ENCODE measurements at regions of chr6 and their contacts with region 1.

Region 1: DNA sequence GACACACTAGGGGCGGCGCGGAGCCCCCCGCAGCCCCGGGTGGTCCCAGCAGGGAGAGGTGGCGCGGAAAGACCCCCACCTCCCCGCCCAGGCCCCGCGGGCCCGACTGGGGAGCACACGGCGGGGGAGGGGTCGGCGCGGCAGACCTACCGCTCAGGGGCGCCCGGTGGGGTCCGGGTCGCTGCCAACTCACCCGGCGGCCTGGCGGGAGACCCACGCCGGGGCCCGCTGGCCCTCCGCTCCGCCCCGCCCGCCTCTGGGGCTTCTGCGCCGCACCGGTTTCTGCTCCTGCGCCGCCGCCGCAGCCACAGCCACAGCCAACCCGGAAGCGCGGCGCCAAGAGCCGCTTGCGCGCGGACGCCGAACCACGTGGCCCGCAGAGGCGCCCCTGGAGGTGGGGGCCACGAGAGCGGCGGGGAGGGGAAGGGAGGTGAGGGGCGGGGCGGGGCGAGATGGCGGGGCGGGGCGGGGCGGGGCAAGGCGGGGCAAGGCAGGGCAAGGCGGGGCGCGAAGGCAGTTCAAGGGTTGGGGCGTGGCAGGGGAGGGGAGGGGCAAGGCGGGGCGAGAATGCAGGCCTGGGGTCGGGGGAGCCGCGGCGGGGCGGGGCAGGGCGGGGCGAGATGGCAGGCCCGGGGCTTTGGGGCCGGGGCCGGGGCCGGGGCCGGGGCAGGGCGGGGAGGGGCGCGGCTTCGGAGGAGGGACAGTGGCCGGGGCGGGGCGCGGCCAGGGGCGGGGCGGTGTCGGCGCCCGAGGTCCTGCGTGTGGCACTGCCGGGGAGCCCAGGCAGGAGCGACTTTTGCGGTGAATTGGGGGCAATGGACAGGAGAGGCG is at the start of gene ZBTB24:
- DNase-seq: peak; percentile 95
- ATAC-seq: peak; percentile 97
- H3K4me3 ChIP-seq: peak within 1 kb of the TSS; percentile 91 to 95
- H3K27ac ChIP-seq: peak within 1 kb of the TSS in 1 of 2 donors; percentile 2
- H3K4me1 ChIP-seq: peaks cover 7 to 14% of the 10 kb centered on the region in 2 donors
- H3K27me3 ChIP-seq: no peaks in the 10 kb centered on the region
- total RNA-seq, gene ZBTB24: 6.8 to 8.3 TPM

Region 2: DNA sequence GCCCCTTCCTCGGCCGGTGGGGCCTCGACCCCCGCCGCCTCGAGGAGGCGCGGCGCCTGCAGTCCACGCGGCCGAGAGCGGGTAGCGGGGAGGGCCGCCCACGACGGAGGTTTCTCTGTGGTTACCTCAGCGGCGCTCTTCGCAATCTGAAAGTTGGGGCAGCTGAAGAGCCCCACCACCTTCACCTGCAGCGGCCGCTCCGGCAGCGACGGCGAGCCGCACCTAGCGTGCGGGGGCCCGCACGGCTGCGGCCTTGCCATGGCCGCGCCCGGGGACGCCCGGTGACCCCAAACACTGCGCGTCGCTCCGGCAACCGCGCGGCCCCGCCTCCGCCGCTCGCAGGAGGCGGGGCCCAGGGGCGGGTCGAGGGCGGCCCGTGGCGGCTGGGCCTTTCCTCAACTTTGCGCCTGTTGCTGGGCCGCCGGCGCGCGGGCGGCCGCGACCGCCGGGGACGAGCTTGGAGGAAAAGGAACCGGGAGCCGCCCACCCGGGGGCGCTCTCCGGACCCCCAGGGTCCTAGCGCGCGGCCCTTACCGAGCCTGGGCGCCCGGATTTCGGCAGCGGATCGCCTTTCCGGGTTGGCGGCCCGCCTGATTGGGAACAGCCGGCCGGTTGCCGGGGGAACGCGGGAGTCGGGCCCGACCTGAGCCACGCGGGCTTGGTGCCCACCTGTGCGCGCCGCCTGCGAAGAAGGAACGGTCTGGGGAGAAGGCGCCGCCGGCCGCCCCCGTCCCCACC is 42.6 kb before region 1 on chr6 and contains the starts of genes PPIL6 and SMPD2:
- intact Hi-C with region 1: loop called in 1 of 2 experiments (anchors 1 kb)
- DNase-seq: peak; percentile 94 to 96
- ATAC-seq: peak; percentile 96
- H3K4me3 ChIP-seq: peak within 1 kb of the TSS; percentile 57 to 63
- H3K27ac ChIP-seq: peak within 1 kb of the TSS in 1 of 2 donors; percentile 35
- H3K4me1 ChIP-seq: no peaks in the 10 kb centered on the region
- H3K27me3 ChIP-seq: no peaks in the 10 kb centered on the region
- total RNA-seq, gene PPIL6: 1.0 to 1.5 TPM
- total RNA-seq, gene SMPD2: 6.6 to 9.5 TPM

Region 3: GRCh38 chr6:109455502-109456282 is 27.4 kb before region 1 on chr6 and contains the start of gene MICAL1:
- intact Hi-C with region 1: loop called in 1 of 2 experiments (anchors 2 kb)
- DNase-seq: peak; percentile 84 to 90
- ATAC-seq: peak; percentile 65
- H3K4me3 ChIP-seq: peak within 1 kb of the TSS; percentile 62 to 78
- H3K27ac ChIP-seq: peak within 1 kb of the TSS; percentile 14 to 62
- H3K4me1 ChIP-seq: no peaks in the 10 kb centered on the region
- H3K27me3 ChIP-seq: no peaks in the 10 kb centered on the region
- total RNA-seq, gene MICAL1: 48.8 to 60.8 TPM

Measured in aorta (tissue), 5 donors.